Common myeloid progenitor, CD34-positive (primary cell): ENCODE measurements at regions of chr9 and their contacts with region 1.

Region 1: GRCh38 chr9:69180670-69181069 is 6.6 kb downstream of the TJP2 start:
- DNase-seq: peak; percentile 89 to 97 (median 95)
- H3K4me3 ChIP-seq: peak overlapping the region in 3 of 7 experiments; percentile 34 to 44 (median 35)
- H3K27ac ChIP-seq: peak overlapping the region; percentile 59 to 79
- H3K4me1 ChIP-seq: peaks cover 3 to 41% (median 16%) of the 10 kb centered on the region in 4 experiments
- H3K27me3 ChIP-seq: no peaks in the 10 kb centered on the region

Region 2: DNA sequence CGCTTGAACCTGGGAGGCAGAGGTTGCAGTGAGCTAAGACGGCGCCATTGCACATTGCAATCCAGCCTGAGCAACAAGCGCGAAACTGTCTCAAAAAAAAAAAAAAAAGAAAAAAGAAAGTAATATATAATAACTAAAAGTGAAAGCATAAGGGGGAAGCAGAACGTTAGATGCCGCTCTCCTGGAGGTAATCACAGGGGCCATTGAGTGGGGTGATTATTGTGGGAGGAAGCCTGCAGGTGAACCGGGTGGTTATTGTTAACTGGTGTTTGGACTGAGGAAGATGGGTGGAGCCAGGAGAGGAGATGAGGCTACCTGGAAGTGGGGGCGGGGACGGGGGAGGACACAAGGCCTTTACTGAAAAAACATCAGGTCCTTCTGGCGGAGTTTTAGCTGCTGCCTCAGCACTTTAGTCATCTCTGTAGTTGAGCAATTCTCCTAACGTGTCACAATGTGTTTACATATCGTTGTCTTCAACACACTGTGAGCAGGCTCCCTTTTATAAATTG is 11.9 kb before region 1 on chr9:
- CTCF ChIA-PET with region 1: interaction called, 15 read pairs
- POLR2A ChIA-PET with region 1: interaction called, 3 read pairs
- DNase-seq: peak; percentile 55 to 80 (median 74)
- H3K4me3 ChIP-seq: peak overlapping the region in 6 of 7 experiments; percentile 14 to 85 (median 63)
- H3K27ac ChIP-seq: peak overlapping the region in 1 of 2 experiments; percentile 78
- H3K4me1 ChIP-seq: peaks cover 0 to 33% (median 19%) of the 10 kb centered on the region in 4 experiments
- H3K27me3 ChIP-seq: no peaks in the 10 kb centered on the region

Region 3: DNA sequence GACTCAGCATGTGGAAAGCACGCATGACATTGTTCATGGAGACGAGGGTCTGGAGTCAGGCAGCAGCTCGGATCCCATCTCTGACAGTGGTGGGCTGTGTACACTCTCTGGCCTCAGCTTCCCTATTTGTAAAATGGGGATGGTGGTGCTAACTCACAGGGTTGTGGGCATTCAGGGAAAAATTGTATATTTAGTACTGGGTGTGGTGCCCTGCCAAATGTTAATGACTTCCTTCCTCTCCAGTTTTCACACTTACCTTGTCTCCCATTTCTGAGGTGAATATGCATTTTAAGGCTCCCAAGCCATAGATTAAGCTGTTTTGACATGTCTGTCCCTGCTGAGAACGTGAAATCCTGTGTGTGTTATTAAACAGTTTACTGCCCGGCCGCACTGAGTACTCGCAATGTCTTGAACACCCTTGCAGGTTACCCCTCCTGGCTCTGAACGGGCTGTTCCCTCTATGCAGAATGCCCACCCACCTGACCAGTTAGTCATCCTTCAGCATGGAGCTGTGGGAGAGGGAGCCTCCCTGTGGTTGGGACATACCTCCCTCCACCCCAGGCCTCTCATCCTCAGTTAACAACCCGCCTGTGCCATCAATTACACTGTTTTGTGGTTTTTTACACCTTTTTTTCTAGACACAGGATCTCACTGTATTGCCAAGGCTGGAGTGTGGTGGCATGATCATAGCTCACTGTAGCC is 19.2 kb after region 1 on chr9:
- CTCF ChIA-PET with region 1: interaction called, 17 read pairs
- POLR2A ChIA-PET with region 1: interaction called, 3 read pairs
- DNase-seq: peak in 2 of 3 donors; percentile 42 to 50
- H3K4me3 ChIP-seq: no peak overlapping the region
- H3K27ac ChIP-seq: no peak overlapping the region
- H3K4me1 ChIP-seq: peaks cover 0 to 11% (median 10%) of the 10 kb centered on the region in 4 experiments
- H3K27me3 ChIP-seq: no peaks in the 10 kb centered on the region